ENCODE measurements at regions of chr2 and their contacts with region 1.

Region 1: DNA sequence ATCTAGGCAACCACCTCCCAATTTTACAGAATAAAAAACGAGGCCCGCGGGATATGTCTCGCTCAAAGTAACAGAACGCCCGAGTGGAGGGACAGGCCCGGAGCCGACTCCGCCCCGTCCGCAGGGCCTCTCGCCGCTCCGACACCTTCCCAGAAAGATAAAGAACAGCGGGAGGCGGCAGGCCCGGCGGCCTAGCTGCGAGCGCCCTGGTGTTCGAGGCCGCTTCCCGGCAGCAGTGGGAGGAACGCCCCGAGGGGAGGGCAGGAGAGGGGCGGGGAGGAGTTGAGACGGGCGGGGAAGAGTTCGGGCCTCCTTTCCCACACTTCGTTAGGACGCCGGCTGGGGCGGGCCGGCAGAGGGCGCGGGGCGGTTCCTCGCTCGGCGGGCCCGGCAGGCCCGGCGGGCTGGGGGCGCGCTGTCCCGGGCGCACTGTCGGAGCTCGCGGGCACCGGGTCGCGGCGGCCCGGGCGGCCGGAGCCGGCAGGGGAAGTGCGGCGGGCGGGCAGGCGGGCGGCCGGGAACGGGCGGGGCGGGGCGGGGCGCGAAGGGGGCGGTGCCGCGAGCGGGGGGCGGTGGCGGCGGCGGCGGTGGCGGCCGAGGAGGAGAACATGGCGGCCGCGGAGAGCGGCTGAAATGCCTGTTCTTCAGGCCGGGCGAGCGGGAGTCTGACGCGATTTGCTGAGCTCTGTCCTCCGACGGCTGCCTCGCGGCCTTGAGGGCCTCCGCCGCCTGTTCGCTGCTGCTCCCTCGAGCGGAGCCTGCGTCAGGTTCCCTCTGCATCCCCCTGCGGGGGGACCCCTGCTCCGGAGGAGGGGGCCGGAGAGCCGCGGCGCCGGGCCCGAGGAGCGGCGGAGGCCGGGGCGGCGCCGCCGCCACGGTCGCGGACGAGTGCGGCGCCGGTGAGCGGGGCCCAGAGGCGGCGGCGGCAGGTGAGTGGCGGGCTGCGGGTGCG is at the start of gene NCOA1:
- DNase-seq: peak; percentile 92 to 95
- ATAC-seq: peak; percentile 80 to 87 (median 84)
- H3K4me3 ChIP-seq: peak within 1 kb of the TSS; percentile 86
- H3K27ac ChIP-seq: peak within 1 kb of the TSS; percentile 94
- H3K4me1 ChIP-seq: peaks cover 34% of the 10 kb centered on the region
- H3K27me3 ChIP-seq: no peaks in the 10 kb centered on the region
- CTCF ChIP-seq: peak; percentile 26
- total RNA-seq, gene NCOA1: 44.2 to 78.1 (median 53.9) TPM

Region 2: DNA sequence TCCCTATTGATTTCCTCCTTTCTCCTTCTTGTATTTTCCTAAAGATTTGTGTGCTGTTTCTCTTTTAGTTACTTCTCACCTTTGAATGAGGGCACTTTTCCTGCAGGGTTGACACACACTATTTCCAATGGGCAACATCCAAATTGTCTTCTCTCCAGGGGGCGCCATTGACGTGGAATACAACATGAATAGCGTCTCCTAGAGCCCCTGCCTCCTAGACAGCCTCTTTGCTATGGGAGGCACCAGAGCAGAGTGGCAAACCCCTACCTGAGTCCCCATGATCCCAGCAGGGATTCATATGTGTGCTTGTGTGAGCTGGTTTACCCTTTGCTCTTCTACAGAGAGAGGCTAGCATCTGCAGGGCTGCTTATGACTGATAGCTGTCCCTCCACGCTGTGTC is 69.3 kb before region 1 on chr2:
- intact Hi-C with region 1: loop called in 1 of 2 experiments (anchors 5 kb)
- DNase-seq: peak; percentile 63 to 66
- ATAC-seq: peak; percentile 66 to 95 (median 88)
- H3K4me3 ChIP-seq: no peak overlapping the region
- H3K27ac ChIP-seq: no peak overlapping the region
- H3K4me1 ChIP-seq: no peaks in the 10 kb centered on the region
- H3K27me3 ChIP-seq: no peaks in the 10 kb centered on the region
- CTCF ChIP-seq: peak; percentile 54

Region 3: GRCh38 chr2:24435391-24436316 is 55.3 kb before region 1 on chr2:
- intact Hi-C with region 1: loop called (anchors 2 to 5 kb)
- DNase-seq: peak; percentile 78 to 86
- ATAC-seq: peak; percentile 85 to 92 (median 91)
- H3K4me3 ChIP-seq: peak overlapping the region; percentile 40
- H3K27ac ChIP-seq: peak overlapping the region; percentile 87
- H3K4me1 ChIP-seq: peaks cover 60% of the 10 kb centered on the region
- H3K27me3 ChIP-seq: no peaks in the 10 kb centered on the region
- CTCF ChIP-seq: no peak

Region 4: GRCh38 chr2:24658531-24659202 is 167.7 kb after region 1 on chr2:
- intact Hi-C with region 1: loop called in 1 of 2 experiments (anchors 10 kb)
- DNase-seq: peak; percentile 30 to 65
- ATAC-seq: peak; percentile 94 to 97 (median 96)
- H3K4me3 ChIP-seq: peak overlapping the region; percentile 4
- H3K27ac ChIP-seq: peak overlapping the region; percentile 73
- H3K4me1 ChIP-seq: peaks cover 46% of the 10 kb centered on the region
- H3K27me3 ChIP-seq: no peaks in the 10 kb centered on the region
- CTCF ChIP-seq: no peak

Region 5: GRCh38 chr2:24827321-24828237 is 336.6 kb after region 1 on chr2:
- intact Hi-C with region 1: loop called in 1 of 2 experiments (anchors 5 kb)
- DNase-seq: peak; percentile 74 to 81
- ATAC-seq: peak; percentile 87 to 94 (median 90)
- H3K4me3 ChIP-seq: peak overlapping the region; percentile 23
- H3K27ac ChIP-seq: no peak overlapping the region
- H3K4me1 ChIP-seq: peaks cover 5% of the 10 kb centered on the region
- H3K27me3 ChIP-seq: no peaks in the 10 kb centered on the region
- CTCF ChIP-seq: peak; percentile 89